ENCODE measurements at regions of chr11 and their contacts with region 1.

Region 1: GRCh38 chr11:63945477-63946163 is 6.8 kb downstream of the NAA40 start:
- DNase-seq: peak; percentile 75 to 82
- ATAC-seq: peak; percentile 98 to 99
- H3K4me3 ChIP-seq: no peak overlapping the region
- H3K27ac ChIP-seq: 0 out of 6 replicates have a peak overlapping the region, but pooled peaks of 1 of the 2 experiments have one; percentile 10
- H3K4me1 ChIP-seq: peaks cover 9% of the 10 kb centered on the region; the same call in 2 of the 3 replicates
- CTCF ChIP-seq: peak; percentile 71
- EP300 ChIP-seq: no peak
- POLR2A ChIP-seq: no peak
- RAD21 ChIP-seq: peak; percentile 79 to 81

Region 2: DNA sequence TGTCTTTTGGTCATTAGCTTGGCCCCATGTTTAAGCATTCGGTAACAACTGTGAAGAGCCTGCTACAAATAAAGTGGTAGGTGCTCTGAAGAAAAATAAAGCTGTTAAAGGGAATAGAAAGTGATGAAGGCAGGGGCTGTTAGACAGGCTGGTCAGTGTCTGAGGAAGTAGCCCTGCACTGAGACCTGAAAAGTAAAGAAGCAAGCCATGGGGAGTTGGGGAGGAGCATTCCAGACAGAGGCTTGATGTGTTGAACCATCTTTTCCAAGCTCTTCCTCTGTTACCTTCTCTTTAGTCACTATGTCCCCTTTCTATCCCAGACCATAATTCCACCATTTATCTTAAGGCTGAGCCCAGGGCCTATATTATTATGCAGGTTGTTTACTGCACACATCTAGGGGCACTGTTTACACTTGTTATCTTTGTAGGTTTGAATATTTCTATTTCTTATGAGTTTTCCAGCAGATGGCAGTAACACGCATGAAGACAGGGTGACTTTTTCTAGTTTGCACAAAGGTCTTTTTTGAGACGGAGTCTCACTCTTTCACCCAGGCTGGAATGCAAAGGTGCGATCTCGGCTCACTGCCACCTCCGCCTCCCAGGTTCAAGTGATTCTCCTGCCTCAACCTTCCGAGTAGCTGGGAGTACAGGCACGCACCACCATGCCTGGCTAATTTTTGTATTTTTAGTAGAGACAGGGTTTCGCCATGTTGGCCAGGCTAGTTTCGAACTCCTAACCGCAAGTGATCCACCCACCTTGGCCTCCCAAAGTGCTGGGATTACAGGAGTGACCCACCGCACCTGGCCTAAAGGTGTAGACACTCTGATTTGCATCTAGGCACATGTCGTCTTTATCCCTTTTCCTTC is 200.1 kb before region 1 on chr11:
- CTCF ChIA-PET with region 1: interaction called, 13 read pairs
- POLR2A ChIA-PET with region 1: no interaction called
- DNase-seq: no peak
- ATAC-seq: peak; percentile 64 to 78; a peak in 5 of 6 replicates
- H3K4me3 ChIP-seq: no peak overlapping the region
- H3K27ac ChIP-seq: no peak overlapping the region
- H3K4me1 ChIP-seq: no peaks in the 10 kb centered on the region
- CTCF ChIP-seq: peak; percentile 42
- EP300 ChIP-seq: no peak
- POLR2A ChIP-seq: no peak
- RAD21 ChIP-seq: peak in 1 of 2 experiments; percentile 40; a peak in 2 of 5 replicates

Region 3: DNA sequence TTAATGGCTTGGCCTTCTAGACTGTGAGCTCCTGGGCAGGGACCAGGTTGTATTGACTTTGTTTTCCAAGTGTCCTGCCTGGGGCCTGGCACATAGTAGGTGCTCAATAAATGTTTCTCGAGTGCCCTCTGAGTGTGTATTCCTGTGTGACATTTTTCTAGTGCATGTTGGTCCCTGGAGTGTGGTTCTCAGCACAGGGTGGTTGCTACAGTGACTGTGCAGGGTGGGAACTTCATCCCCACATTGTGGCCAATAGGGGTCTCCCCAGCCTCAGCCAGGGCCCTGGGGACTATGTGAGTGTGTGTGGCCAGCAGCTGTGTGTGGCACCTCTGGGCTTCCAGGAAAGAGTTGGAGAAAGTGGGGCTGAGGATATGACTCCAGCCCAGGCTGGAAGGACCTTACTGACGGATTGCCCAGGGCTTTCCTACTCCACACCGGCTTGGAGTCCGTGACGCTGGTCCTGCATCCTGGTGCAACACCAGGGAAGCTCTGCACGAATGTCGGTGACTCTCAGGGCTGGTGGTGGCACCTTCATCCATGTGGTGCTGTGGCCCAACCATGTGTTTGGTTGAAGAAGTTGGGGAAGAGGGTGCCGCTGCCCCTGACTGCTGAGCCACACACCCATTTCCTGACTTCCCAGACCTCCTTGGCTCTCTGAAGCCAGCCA is 115.7 kb before region 1 on chr11:
- CTCF ChIA-PET with region 1: interaction called, 236 read pairs
- POLR2A ChIA-PET with region 1: no interaction called
- DNase-seq: peak in 1 of 2 experiments; percentile 59
- ATAC-seq: peak; percentile 77 to 89
- H3K4me3 ChIP-seq: no peak overlapping the region
- H3K27ac ChIP-seq: no peak overlapping the region
- H3K4me1 ChIP-seq: no peaks in the 10 kb centered on the region
- CTCF ChIP-seq: peak; percentile 40; the same call in 2 of the 3 replicates
- EP300 ChIP-seq: no peak
- POLR2A ChIP-seq: no peak
- RAD21 ChIP-seq: peak; percentile 45 to 66; a peak in 4 of 5 replicates

Region 4: DNA sequence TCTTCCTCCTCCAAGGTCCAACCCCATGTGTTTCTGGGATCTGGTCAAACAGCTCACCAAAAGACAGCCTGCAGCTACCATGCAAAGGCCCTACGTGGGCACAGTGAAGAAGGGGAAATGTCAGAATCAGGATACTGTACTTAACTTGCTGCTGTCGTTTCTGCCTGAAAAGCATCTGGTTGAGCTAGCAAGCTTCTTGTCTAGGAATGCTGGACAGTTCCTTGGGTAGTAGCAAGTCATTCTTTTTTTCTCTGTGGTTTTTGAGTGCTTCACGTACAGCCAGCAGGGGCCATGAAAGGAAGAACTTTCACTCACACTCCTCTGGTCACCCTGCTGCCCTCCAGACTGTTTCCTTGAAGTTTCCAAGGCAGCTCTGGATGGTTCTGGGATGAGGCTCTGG is 53.4 kb before region 1 on chr11:
- CTCF ChIA-PET with region 1: interaction called, 14 read pairs
- POLR2A ChIA-PET with region 1: no interaction called
- DNase-seq: no peak
- ATAC-seq: no peak; a peak in 1 of 6 replicates
- H3K4me3 ChIP-seq: no peak overlapping the region
- H3K27ac ChIP-seq: no peak overlapping the region
- H3K4me1 ChIP-seq: peaks cover 19% of the 10 kb centered on the region
- CTCF ChIP-seq: no peak
- EP300 ChIP-seq: no peak
- POLR2A ChIP-seq: no peak
- RAD21 ChIP-seq: no peak

Region 5: GRCh38 chr11:63916837-63917691 is 28.6 kb before region 1 on chr11 and contains the start of gene RCOR2:
- CTCF ChIA-PET with region 1: interaction called, 57 read pairs
- POLR2A ChIA-PET with region 1: no interaction called
- DNase-seq: peak; percentile 87 to 91
- ATAC-seq: peak; percentile 47 to 51
- H3K4me3 ChIP-seq: peak within 1 kb of the TSS; percentile 62
- H3K27ac ChIP-seq: peak within 1 kb of the TSS; percentile 83 to 92
- H3K4me1 ChIP-seq: peaks cover 37% of the 10 kb centered on the region
- CTCF ChIP-seq: no peak
- EP300 ChIP-seq: no peak
- POLR2A ChIP-seq: peak; percentile 58
- RAD21 ChIP-seq: no peak
- polyA plus RNA-seq, gene RCOR2: 1.8 and 2.5 TPM in 2 replicates

Region 6: GRCh38 chr11:63961608-63962412 is 16.2 kb after region 1 on chr11:
- CTCF ChIA-PET with region 1: interaction called, 52 read pairs
- POLR2A ChIA-PET with region 1: no interaction called
- DNase-seq: peak in 1 of 2 experiments; percentile 21
- ATAC-seq: peak; percentile 28 to 57; a peak in 3 of 6 replicates
- H3K4me3 ChIP-seq: no peak overlapping the region
- H3K27ac ChIP-seq: no peak overlapping the region
- H3K4me1 ChIP-seq: peaks cover 6% of the 10 kb centered on the region; the same call in 1 of the 3 replicates
- CTCF ChIP-seq: no peak
- EP300 ChIP-seq: no peak
- POLR2A ChIP-seq: no peak
- RAD21 ChIP-seq: no peak